ENCODE measurements at regions of chrX and their contacts with region 1.

Region 1: GRCh38 chrX:103697687-103698086 is 11.2 kb upstream of the MORF4L2 start:
- DNase-seq: no peak
- H3K4me3 ChIP-seq: no peak overlapping the region
- H3K27ac ChIP-seq: no peak overlapping the region
- H3K4me1 ChIP-seq: no peaks in the 10 kb centered on the region
- H3K27me3 ChIP-seq: no peaks in the 10 kb centered on the region
- CTCF ChIP-seq: no peak
- POLR2A ChIP-seq: no peak

Region 2: GRCh38 chrX:103475381-103475780 is 222.3 kb before region 1 on chrX:
- intact Hi-C with region 1: no loop called
- DNase-seq: no peak
- H3K4me3 ChIP-seq: no peak overlapping the region
- H3K27ac ChIP-seq: no peak overlapping the region
- H3K4me1 ChIP-seq: no peaks in the 10 kb centered on the region
- H3K27me3 ChIP-seq: no peaks in the 10 kb centered on the region
- CTCF ChIP-seq: no peak
- POLR2A ChIP-seq: no peak

Region 3: DNA sequence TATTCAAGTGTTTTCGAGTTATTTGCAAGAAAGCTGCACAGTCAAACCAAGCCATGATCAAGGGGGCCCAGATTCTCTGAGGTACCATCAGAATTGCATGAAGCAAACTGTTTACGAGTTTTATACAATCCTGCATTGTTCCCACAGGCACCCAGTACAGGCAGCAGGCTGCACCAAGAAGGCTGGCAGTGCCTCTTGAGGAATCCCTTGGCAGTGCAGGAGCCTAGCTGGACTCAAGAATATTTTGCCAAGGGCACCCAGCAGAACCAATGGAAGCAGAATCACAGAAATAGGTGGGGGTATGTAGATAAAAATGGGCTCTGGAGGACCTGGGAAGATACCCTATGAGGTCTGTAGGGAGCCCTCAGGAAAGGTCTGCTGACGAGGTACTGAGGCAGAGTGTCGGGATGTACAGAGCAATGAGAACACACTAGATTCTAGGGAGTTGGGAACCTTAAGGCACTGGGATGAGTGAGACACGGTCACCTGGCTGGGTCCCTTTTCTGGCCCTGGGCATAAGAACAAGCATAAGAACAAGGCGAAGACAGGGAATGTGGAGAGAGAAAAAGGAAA is 76.5 kb after region 1 on chrX:
- intact Hi-C with region 1: loop called (anchors 10 kb)
- DNase-seq: no peak
- H3K4me3 ChIP-seq: no peak overlapping the region
- H3K27ac ChIP-seq: no peak overlapping the region
- H3K4me1 ChIP-seq: no peaks in the 10 kb centered on the region
- H3K27me3 ChIP-seq: no peaks in the 10 kb centered on the region
- CTCF ChIP-seq: peak in 4 of 6 experiments; percentile 26 to 48 (median 34)
- POLR2A ChIP-seq: no peak